CD8-positive, alpha-beta T cell (primary cell): ENCODE measurements at regions of chr17 and their contacts with region 1.

Region 1: DNA sequence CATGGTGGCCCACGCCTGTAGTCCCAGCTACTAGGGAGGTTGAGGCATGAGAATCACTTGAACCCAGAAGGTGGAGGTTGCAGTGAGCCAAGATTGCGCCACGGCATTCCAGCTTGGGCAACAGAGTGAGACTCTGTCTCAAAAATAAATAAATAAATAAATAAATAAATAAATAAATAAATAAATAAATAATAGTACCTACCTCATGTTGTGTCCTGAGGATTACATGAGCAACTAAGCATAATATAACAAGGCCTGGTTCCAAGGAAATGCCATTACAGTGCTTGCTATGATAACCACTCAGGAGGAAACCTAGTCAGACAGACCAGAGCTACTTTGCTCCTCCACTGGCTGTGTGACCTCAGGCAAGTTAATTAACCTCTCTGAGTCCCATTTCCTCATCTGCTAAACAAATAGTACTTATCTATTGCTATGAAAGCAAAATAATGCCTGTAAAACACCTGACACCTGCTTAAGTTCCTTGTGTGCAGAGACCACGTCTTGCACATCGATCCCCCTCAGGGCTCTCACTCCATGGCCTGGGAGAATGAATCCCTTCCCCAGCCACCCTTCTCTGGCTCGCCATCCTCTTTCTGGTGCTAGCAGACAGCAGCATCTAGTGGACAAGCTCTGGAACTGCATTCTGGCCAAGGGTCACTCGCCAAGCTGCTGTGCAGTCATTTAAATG is 7.5 kb downstream of the EPOP start:
- DNase-seq: peak in 7 of 9 experiments; percentile 27 to 72 (median 61)
- ATAC-seq: peak; percentile 70
- H3K4me3 ChIP-seq: no peak overlapping the region
- H3K4me3 Mint-ChIP-seq: no peak overlapping the region
- H3K27ac ChIP-seq: no peak overlapping the region
- H3K27ac Mint-ChIP-seq: no peak overlapping the region
- H3K4me1 ChIP-seq: no peaks in the 10 kb centered on the region
- H3K4me1 Mint-ChIP-seq: peaks cover 6% of the 10 kb centered on the region
- H3K27me3 ChIP-seq: peaks cover 2 to 12% of the 10 kb centered on the region in 2 experiments
- H3K27me3 Mint-ChIP-seq: peaks cover 61% of the 10 kb centered on the region
- CTCF ChIP-seq: peak; percentile 92

Region 2: GRCh38 chr17:38444151-38444550 is 223.1 kb before region 1 on chr17:
- CTCF ChIA-PET with region 1: interaction called, 7 read pairs
- POLR2A ChIA-PET with region 1: no interaction called
- intact Hi-C with region 1: loop called in 1 of 2 experiments (anchors 1 kb)
- DNase-seq: peak; percentile 11 to 67 (median 54)
- ATAC-seq: peak; percentile 93
- H3K4me3 ChIP-seq: no peak overlapping the region
- H3K4me3 Mint-ChIP-seq: no peak overlapping the region
- H3K27ac ChIP-seq: no peak overlapping the region
- H3K27ac Mint-ChIP-seq: no peak overlapping the region
- H3K4me1 ChIP-seq: peaks cover 7% of the 10 kb centered on the region
- H3K4me1 Mint-ChIP-seq: peaks cover 6% of the 10 kb centered on the region
- H3K27me3 ChIP-seq: no peaks in the 10 kb centered on the region
- H3K27me3 Mint-ChIP-seq: peaks cover 2% of the 10 kb centered on the region
- CTCF ChIP-seq: peak; percentile 67

Region 3: GRCh38 chr17:38557836-38558727 is 109.2 kb before region 1 on chr17:
- CTCF ChIA-PET with region 1: interaction called, 67 read pairs
- POLR2A ChIA-PET with region 1: interaction called, 3 read pairs
- intact Hi-C with region 1: loop called (anchors 1 kb)
- DNase-seq: peak; percentile 75 to 94 (median 88)
- ATAC-seq: peak; percentile 74
- H3K4me3 ChIP-seq: peak overlapping the region; percentile 60 to 77
- H3K4me3 Mint-ChIP-seq: peak overlapping the region; percentile 92
- H3K27ac ChIP-seq: no peak overlapping the region
- H3K27ac Mint-ChIP-seq: no peak overlapping the region
- H3K4me1 ChIP-seq: peaks cover 28% of the 10 kb centered on the region
- H3K4me1 Mint-ChIP-seq: peaks cover 26% of the 10 kb centered on the region
- H3K27me3 ChIP-seq: peaks cover 17 to 27% of the 10 kb centered on the region in 2 experiments
- H3K27me3 Mint-ChIP-seq: peaks cover 24% of the 10 kb centered on the region
- CTCF ChIP-seq: peak; percentile 93

Region 4: GRCh38 chr17:38605888-38606645 is 61.2 kb before region 1 on chr17 and contains the start of gene SRCIN1:
- CTCF ChIA-PET with region 1: interaction called, 4 read pairs
- POLR2A ChIA-PET with region 1: no interaction called
- intact Hi-C with region 1: loop called in 1 of 2 experiments (anchors 10 kb)
- DNase-seq: peak in 7 of 9 experiments; percentile 9 to 66 (median 50)
- ATAC-seq: peak; percentile 69
- H3K4me3 ChIP-seq: peak within 1 kb of the TSS; percentile 44 to 50
- H3K4me3 Mint-ChIP-seq: peak within 1 kb of the TSS; percentile 72
- H3K27ac ChIP-seq: no peak within 1 kb of the TSS
- H3K27ac Mint-ChIP-seq: no peak within 1 kb of the TSS
- H3K4me1 ChIP-seq: peaks cover 20% of the 10 kb centered on the region
- H3K4me1 Mint-ChIP-seq: peaks cover 25% of the 10 kb centered on the region
- H3K27me3 ChIP-seq: peaks cover 41 to 50% of the 10 kb centered on the region in 2 experiments
- H3K27me3 Mint-ChIP-seq: peaks cover 44% of the 10 kb centered on the region
- CTCF ChIP-seq: peak; percentile 92
- total RNA-seq, gene SRCIN1: 0.47 to 0.52 TPM

Region 5: DNA sequence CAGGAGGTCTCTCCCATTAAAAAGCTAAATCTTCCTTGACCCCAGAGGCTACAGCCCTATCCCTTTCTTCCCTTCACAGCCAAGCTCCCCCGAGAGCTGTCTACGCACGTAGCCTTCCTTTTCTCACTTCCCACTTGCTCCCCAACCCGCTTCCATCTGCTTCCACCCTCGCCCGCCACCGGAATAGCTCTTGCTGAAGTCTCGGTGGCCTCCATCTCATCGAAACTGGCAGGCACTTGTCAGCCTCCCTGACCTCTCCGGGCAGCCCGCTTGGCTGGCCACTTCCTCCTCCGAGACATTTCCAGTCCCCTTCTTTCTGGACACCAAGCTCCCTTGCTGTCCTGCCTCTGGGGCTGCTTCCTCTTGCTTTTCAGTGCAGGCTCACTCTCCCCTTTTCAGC is 18.2 kb after region 1 on chr17:
- CTCF ChIA-PET with region 1: interaction called, 10 read pairs
- POLR2A ChIA-PET with region 1: no interaction called
- intact Hi-C with region 1: no loop called
- DNase-seq: no peak
- ATAC-seq: no peak
- H3K4me3 ChIP-seq: no peak overlapping the region
- H3K4me3 Mint-ChIP-seq: no peak overlapping the region
- H3K27ac ChIP-seq: no peak overlapping the region
- H3K27ac Mint-ChIP-seq: no peak overlapping the region
- H3K4me1 ChIP-seq: no peaks in the 10 kb centered on the region
- H3K4me1 Mint-ChIP-seq: no peaks in the 10 kb centered on the region
- H3K27me3 ChIP-seq: no peaks in the 10 kb centered on the region
- H3K27me3 Mint-ChIP-seq: no peaks in the 10 kb centered on the region
- CTCF ChIP-seq: no peak

Region 6: GRCh38 chr17:38768417-38768816 is 101.2 kb after region 1 on chr17:
- CTCF ChIA-PET with region 1: no interaction called
- POLR2A ChIA-PET with region 1: no interaction called
- intact Hi-C with region 1: no loop called
- DNase-seq: no peak
- ATAC-seq: no peak
- H3K4me3 ChIP-seq: no peak overlapping the region
- H3K4me3 Mint-ChIP-seq: no peak overlapping the region
- H3K27ac ChIP-seq: no peak overlapping the region
- H3K27ac Mint-ChIP-seq: no peak overlapping the region
- H3K4me1 ChIP-seq: no peaks in the 10 kb centered on the region
- H3K4me1 Mint-ChIP-seq: no peaks in the 10 kb centered on the region
- H3K27me3 ChIP-seq: no peaks in the 10 kb centered on the region
- H3K27me3 Mint-ChIP-seq: no peaks in the 10 kb centered on the region
- CTCF ChIP-seq: no peak

Region 7: DNA sequence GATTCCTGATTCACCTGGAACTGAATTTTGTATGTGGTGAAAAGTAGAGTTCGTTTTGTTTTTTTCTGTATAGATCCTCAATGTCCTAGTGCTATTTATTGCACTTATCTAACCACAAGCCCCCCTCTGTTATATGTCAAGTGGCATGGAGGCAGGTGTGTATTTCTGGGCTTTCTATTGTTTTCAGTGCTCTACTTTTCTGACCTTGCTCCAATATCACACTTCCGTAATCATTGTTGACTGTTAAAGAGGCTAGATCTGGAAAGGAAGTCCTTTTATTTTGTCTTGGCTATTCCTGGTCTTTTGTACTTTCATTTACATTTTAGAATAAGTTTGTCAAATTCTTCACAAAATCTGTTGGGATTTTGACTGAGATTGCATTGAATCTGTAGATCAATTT is 326.8 kb after region 1 on chr17:
- CTCF ChIA-PET with region 1: no interaction called
- POLR2A ChIA-PET with region 1: no interaction called
- intact Hi-C with region 1: no loop called
- DNase-seq: no peak
- ATAC-seq: no peak
- H3K4me3 ChIP-seq: no peak overlapping the region
- H3K4me3 Mint-ChIP-seq: no peak overlapping the region
- H3K27ac ChIP-seq: no peak overlapping the region
- H3K27ac Mint-ChIP-seq: no peak overlapping the region
- H3K4me1 ChIP-seq: no peaks in the 10 kb centered on the region
- H3K4me1 Mint-ChIP-seq: no peaks in the 10 kb centered on the region
- H3K27me3 ChIP-seq: no peaks in the 10 kb centered on the region
- H3K27me3 Mint-ChIP-seq: no peaks in the 10 kb centered on the region
- CTCF ChIP-seq: no peak